Natural killer cell (primary cell): ENCODE measurements at regions of chr3 and their contacts with region 1.

Region 1: GRCh38 chr3:59386165-59386564 is 336.3 kb upstream of the CFAP20DC start:
- DNase-seq: no peak
- ATAC-seq: no peak
- H3K4me3 ChIP-seq: no peak overlapping the region
- H3K4me3 Mint-ChIP-seq: no peak overlapping the region
- H3K27ac ChIP-seq: no peak overlapping the region
- H3K27ac Mint-ChIP-seq: no peak overlapping the region
- H3K4me1 ChIP-seq: no peaks in the 10 kb centered on the region
- H3K4me1 Mint-ChIP-seq: peaks cover 8% of the 10 kb centered on the region in 2 donors
- H3K27me3 ChIP-seq: no peaks in the 10 kb centered on the region
- H3K27me3 Mint-ChIP-seq: no peaks in the 10 kb centered on the region
- CTCF ChIP-seq: no peak

Region 2: DNA sequence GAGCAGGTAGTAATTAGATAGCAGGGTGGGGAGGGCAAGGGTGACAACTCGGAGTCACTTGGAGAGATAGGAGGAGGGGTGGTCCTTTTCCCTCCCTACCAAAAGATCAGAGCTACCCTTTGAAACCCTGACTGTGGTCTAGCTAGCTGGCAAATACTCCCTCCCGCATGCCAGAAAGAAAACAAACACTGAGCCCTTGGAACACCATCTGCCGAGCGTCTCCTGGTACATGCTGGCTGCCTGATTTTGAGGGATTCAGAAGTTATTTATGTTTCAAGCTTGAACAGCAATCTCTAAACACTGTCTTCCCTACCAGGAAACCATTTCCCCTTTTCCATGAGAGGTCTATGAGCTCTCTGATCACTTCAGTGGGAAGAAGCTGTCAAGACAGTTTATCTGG is 44.7 kb before region 1 on chr3:
- intact Hi-C with region 1: loop called (anchors 1 kb)
- DNase-seq: no peak
- ATAC-seq: no peak
- H3K4me3 ChIP-seq: no peak overlapping the region
- H3K4me3 Mint-ChIP-seq: no peak overlapping the region
- H3K27ac ChIP-seq: no peak overlapping the region
- H3K27ac Mint-ChIP-seq: no peak overlapping the region
- H3K4me1 ChIP-seq: no peaks in the 10 kb centered on the region
- H3K4me1 Mint-ChIP-seq: no peaks in the 10 kb centered on the region
- H3K27me3 ChIP-seq: no peaks in the 10 kb centered on the region
- H3K27me3 Mint-ChIP-seq: peaks cover 0 to 9% of the 10 kb centered on the region in 2 donors
- CTCF ChIP-seq: no peak